AG04450 (cell line): ENCODE measurements at regions of chr16 and their contacts with region 1.

Region 1: GRCh38 chr16:11407047-11407982 is 62.1 kb downstream of the RMI2 start:
- DNase-seq: peak; percentile 39
- H3K4me3 ChIP-seq: no peak overlapping the region
- H3K27ac ChIP-seq: no peak overlapping the region
- H3K27me3 ChIP-seq: no peaks in the 10 kb centered on the region
- CTCF ChIP-seq: peak; percentile 75

Region 2: DNA sequence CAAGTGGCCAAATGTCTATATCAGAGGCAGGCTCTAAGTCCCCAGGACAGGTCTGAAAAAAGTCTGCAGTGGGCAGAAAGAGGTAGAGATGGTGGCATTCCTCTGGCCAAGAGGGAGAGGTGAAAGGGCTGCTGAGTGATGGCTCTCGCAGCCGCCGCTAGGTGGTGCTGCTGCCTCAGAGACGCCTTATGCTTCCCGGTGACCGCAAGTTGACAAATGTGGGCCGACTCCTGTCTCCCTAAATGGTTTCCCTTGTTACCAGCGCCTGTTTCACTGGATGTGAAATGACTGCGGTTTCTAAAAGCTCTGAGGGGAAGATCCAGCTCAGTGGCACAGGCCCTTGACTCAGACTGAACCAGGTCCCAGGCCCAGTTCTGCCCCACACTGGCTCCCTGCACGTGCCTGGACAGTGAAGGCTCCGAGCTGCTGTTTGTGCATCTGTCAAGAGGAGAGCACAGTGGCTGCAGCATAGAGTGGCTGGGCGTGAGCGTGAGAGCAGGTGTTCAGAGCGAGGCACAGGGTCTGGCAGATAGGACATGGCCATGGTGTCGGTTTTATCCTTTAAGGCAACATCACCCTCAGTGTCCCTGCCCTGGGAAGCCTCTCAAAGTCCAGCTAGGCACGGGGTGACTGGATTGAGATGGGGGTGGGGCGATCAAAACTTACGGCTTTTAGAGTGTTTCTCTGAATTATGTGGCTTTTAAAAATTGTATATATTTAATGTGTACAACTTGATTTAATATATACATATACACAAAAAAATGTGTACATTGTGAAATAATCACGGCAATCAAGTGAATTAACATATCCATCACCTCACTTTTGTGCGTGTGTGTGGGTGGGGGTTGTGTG is 443.1 kb before region 1 on chr16:
- CTCF ChIA-PET with region 1: interaction called, 20 read pairs
- POLR2A ChIA-PET with region 1: no interaction called
- DNase-seq: peak; percentile 65
- H3K4me3 ChIP-seq: no peak overlapping the region
- H3K27ac ChIP-seq: peak overlapping the region; percentile 33
- H3K27me3 ChIP-seq: no peaks in the 10 kb centered on the region
- CTCF ChIP-seq: peak; percentile 96

Region 3: GRCh38 chr16:11240636-11241473 is 166.5 kb before region 1 on chr16:
- CTCF ChIA-PET with region 1: no interaction called
- POLR2A ChIA-PET with region 1: no interaction called
- DNase-seq: no peak
- H3K4me3 ChIP-seq: no peak overlapping the region
- H3K27ac ChIP-seq: no peak overlapping the region
- H3K27me3 ChIP-seq: no peaks in the 10 kb centered on the region
- CTCF ChIP-seq: no peak

Region 4: GRCh38 chr16:11308493-11309283 is 98.6 kb before region 1 on chr16:
- CTCF ChIA-PET with region 1: no interaction called
- POLR2A ChIA-PET with region 1: no interaction called
- DNase-seq: no peak
- H3K4me3 ChIP-seq: no peak overlapping the region
- H3K27ac ChIP-seq: no peak overlapping the region
- H3K27me3 ChIP-seq: no peaks in the 10 kb centered on the region
- CTCF ChIP-seq: no peak

Region 5: DNA sequence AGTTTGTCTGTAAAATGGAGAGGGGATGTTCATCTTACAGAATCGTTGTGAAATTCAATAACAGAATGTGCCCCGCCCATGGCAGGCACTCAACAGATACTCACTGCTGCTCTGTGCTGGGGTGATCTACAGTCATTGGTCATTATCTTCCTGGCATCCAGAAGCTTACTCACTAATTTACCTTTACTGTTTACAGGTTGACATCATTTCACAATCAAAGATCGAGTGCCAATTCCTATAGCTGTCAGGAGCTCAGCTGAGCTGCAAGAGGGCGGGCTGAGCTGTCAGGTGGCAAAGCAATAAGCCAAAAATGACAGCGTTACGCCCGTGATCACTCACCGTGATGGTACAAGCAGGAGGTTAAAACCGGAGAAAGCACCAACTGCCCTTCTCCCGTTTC is 128.2 kb after region 1 on chr16:
- CTCF ChIA-PET with region 1: interaction called, 12 read pairs
- POLR2A ChIA-PET with region 1: no interaction called
- DNase-seq: no peak
- H3K4me3 ChIP-seq: no peak overlapping the region
- H3K27ac ChIP-seq: no peak overlapping the region
- H3K27me3 ChIP-seq: no peaks in the 10 kb centered on the region
- CTCF ChIP-seq: no peak

Region 6: GRCh38 chr16:11639925-11640899 is 232.9 kb after region 1 on chr16:
- CTCF ChIA-PET with region 1: interaction called, 54 read pairs
- POLR2A ChIA-PET with region 1: no interaction called
- DNase-seq: peak; percentile 99
- H3K4me3 ChIP-seq: 0 out of 2 replicates have a peak overlapping the region, but pooled peaks have one; percentile 17
- H3K27ac ChIP-seq: peak overlapping the region; percentile 100
- H3K27me3 ChIP-seq: no peaks in the 10 kb centered on the region
- CTCF ChIP-seq: no peak

Region 7: DNA sequence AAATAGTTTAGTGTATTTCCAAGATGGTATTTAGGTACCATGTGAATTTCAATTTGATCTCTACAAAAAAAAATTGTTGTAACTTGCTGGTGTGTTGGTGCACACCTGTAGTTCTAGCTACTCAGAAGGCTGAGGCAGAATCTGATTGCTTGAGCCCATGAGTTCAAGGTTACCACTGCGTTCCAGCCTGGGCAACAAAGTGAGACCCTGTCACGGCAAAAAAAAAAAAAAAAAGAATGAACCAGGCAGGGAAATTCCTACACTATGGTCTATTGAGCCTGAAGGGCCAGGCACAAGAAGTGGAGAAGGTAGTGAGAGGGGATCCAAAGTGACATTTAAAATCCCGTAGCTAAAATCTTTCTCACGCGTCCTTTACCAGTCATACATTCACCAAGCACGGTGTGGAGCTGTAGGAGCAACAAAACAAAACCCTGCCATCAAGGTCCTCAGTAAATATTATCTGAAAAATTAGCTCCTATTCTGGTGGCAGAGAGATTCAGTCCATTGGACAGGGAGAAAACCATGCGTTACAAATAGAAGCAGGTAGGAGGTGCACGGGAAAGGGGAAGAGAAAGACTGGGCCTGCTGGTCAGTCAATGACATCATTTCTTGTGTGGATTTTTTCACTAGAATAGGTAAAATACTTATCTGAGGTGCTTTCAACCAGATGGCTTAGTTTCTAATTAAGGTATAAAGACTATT is 308.1 kb after region 1 on chr16:
- CTCF ChIA-PET with region 1: interaction called, 30 read pairs
- POLR2A ChIA-PET with region 1: no interaction called
- DNase-seq: no peak
- H3K4me3 ChIP-seq: no peak overlapping the region
- H3K27ac ChIP-seq: no peak overlapping the region
- H3K27me3 ChIP-seq: no peaks in the 10 kb centered on the region
- CTCF ChIP-seq: no peak